ENCODE measurements at regions of chr1 and their contacts with region 1.

Region 1: GRCh38 chr1:186315570-186315969 is 59.5 kb downstream of the TPR start:
- DNase-seq: no peak
- H3K4me3 Mint-ChIP-seq: no peak overlapping the region
- H3K27ac Mint-ChIP-seq: no peak overlapping the region
- H3K4me1 Mint-ChIP-seq: no peaks in the 10 kb centered on the region
- H3K27me3 Mint-ChIP-seq: no peaks in the 10 kb centered on the region
- CTCF ChIP-seq: no peak

Region 2: DNA sequence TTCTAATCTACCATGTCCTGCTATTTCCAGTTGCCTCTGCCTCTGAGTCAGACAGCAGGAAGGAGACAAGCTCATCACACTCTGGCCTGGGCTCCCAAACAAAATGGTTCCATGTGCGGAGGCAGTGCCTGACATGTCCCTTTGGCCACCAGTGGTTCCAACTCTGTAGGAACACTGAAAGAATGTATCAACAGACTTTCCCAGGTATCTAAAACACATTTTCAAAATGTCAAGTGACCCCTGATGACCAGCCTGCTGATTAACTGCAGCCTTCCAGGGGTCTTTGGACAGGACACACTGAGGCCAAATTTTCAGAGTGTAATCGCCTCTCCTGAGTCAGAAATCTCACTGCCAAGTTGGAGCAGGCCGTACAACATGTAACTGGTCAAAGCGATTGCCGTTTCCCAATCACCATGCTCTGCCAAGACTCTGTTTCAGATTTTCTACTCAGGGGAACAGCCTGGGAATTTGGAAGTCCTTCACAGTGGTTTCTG is 113.3 kb before region 1 on chr1:
- CTCF ChIA-PET with region 1: no interaction called
- POLR2A ChIA-PET with region 1: no interaction called
- intact Hi-C with region 1: no loop called
- DNase-seq: no peak
- H3K4me3 Mint-ChIP-seq: no peak overlapping the region
- H3K27ac Mint-ChIP-seq: no peak overlapping the region
- H3K4me1 Mint-ChIP-seq: no peaks in the 10 kb centered on the region
- H3K27me3 Mint-ChIP-seq: no peaks in the 10 kb centered on the region
- CTCF ChIP-seq: no peak

Region 3: GRCh38 chr1:186330758-186331157 is 15.2 kb after region 1 on chr1:
- CTCF ChIA-PET with region 1: interaction called, 10 read pairs
- POLR2A ChIA-PET with region 1: interaction called, 5 read pairs
- intact Hi-C with region 1: no loop called
- DNase-seq: no peak
- H3K4me3 Mint-ChIP-seq: no peak overlapping the region
- H3K27ac Mint-ChIP-seq: no peak overlapping the region
- H3K4me1 Mint-ChIP-seq: no peaks in the 10 kb centered on the region
- H3K27me3 Mint-ChIP-seq: no peaks in the 10 kb centered on the region
- CTCF ChIP-seq: peak; percentile 39

Region 4: GRCh38 chr1:186363891-186364290 is 48.3 kb after region 1 on chr1:
- CTCF ChIA-PET with region 1: interaction called, 4 read pairs
- POLR2A ChIA-PET with region 1: no interaction called
- intact Hi-C with region 1: loop called (anchors 5 kb)
- DNase-seq: no peak
- H3K4me3 Mint-ChIP-seq: no peak overlapping the region
- H3K27ac Mint-ChIP-seq: no peak overlapping the region
- H3K4me1 Mint-ChIP-seq: peaks cover 5% of the 10 kb centered on the region
- H3K27me3 Mint-ChIP-seq: no peaks in the 10 kb centered on the region
- CTCF ChIP-seq: no peak

Region 5: DNA sequence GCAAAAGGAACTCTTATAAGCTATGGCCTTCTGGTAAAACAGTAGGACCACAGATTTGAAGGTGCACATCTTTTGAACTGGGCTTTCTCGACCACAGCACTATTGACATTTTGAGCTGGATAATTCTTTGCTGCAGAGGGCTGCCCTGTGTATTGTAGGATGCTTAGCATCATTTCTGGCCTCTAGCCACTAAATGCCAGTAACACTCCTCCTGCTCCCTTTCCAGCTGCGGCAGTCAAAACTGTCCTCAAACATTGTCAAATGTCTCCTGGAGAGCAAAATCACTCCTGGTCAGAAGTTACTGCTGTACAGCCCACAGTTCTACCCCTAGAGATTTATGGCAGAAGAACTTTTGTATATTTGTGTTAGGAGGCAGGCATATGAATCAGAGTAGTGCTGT is 1349.9 kb after region 1 on chr1:
- CTCF ChIA-PET with region 1: no interaction called
- POLR2A ChIA-PET with region 1: no interaction called
- intact Hi-C with region 1: no loop called
- DNase-seq: no peak
- H3K4me3 Mint-ChIP-seq: no peak overlapping the region
- H3K27ac Mint-ChIP-seq: no peak overlapping the region
- H3K4me1 Mint-ChIP-seq: no peaks in the 10 kb centered on the region
- H3K27me3 Mint-ChIP-seq: no peaks in the 10 kb centered on the region
- CTCF ChIP-seq: no peak